Naive thymus-derived CD4-positive, alpha-beta T cell (primary cell): ENCODE measurements at regions of chr1 and their contacts with region 1.

Region 1: DNA sequence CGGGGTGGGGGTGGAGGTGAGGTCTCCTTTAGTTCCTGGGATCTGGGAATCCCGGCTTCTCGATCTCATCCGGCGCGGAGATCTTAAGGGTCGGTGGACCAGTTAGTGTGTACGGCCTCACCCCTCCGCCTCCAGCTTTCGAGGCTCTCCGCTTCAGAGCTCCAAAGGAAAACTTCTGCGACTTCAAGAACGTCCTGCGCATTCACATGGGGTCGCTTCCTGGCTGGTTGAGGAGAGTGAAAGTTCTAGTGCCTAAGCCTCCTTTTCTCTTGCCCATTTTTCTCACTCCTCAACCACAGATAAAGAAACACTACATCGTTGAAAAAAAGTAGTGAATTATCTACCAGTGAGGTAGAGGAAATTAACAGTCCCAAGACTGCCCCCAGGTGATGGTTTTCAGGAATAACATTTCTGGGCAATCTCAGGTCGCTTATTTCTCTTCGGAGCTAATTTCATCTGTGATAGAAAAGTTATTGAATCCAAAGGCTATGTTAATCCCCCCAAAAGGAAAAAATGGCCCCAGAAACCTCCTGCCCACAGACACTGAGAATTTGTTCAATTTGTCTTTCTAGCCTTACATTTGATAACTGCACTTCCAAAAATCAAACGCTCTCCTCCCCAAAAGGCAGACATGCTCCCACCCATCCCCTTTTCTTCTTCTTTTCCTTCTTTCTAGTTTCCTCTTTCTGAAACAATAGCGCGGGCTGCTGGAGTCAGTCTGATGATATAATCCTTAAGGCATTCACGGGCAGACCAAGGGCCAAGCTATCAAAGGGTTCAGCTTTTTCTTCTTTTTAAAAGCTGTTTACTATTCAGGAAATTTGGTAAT is 20.6 kb upstream of the TBX15 start:
- DNase-seq: no peak
- ATAC-seq: peak; percentile 46
- H3K4me3 ChIP-seq: no peak overlapping the region
- H3K4me3 Mint-ChIP-seq: peak overlapping the region; percentile 40 to 78 (median 67)
- H3K27ac ChIP-seq: no peak overlapping the region
- H3K27ac Mint-ChIP-seq: peak overlapping the region in 1 of 9 donors; percentile 60
- H3K4me1 ChIP-seq: no peaks in the 10 kb centered on the region
- H3K4me1 Mint-ChIP-seq: peaks cover 5 to 18% (median 14%) of the 10 kb centered on the region in 7 donors
- H3K27me3 ChIP-seq: peaks cover 2 to 19% of the 10 kb centered on the region in 2 donors
- H3K27me3 Mint-ChIP-seq: peaks cover 72 to 87% (median 77%) of the 10 kb centered on the region in 5 donors

Region 2: GRCh38 chr1:118151312-118151937 is 857.3 kb before region 1 on chr1:
- CTCF ChIA-PET with region 1: no interaction called
- POLR2A ChIA-PET with region 1: no interaction called
- intact Hi-C with region 1: loop called in 1 of 2 experiments (anchors 5 kb)
- DNase-seq: peak in 1 of 9 donors; percentile 4
- ATAC-seq: no peak
- H3K4me3 ChIP-seq: no peak overlapping the region
- H3K4me3 Mint-ChIP-seq: no peak overlapping the region
- H3K27ac ChIP-seq: no peak overlapping the region
- H3K27ac Mint-ChIP-seq: no peak overlapping the region
- H3K4me1 ChIP-seq: no peaks in the 10 kb centered on the region
- H3K4me1 Mint-ChIP-seq: no peaks in the 10 kb centered on the region
- H3K27me3 ChIP-seq: no peaks in the 10 kb centered on the region
- H3K27me3 Mint-ChIP-seq: peaks cover 0 to 4% (median 0%) of the 10 kb centered on the region in 5 donors

Region 3: GRCh38 chr1:118949315-118949714 is 59.4 kb before region 1 on chr1:
- CTCF ChIA-PET with region 1: no interaction called
- POLR2A ChIA-PET with region 1: no interaction called
- intact Hi-C with region 1: no loop called
- DNase-seq: no peak
- ATAC-seq: no peak
- H3K4me3 ChIP-seq: no peak overlapping the region
- H3K4me3 Mint-ChIP-seq: no peak overlapping the region
- H3K27ac ChIP-seq: no peak overlapping the region
- H3K27ac Mint-ChIP-seq: no peak overlapping the region
- H3K4me1 ChIP-seq: no peaks in the 10 kb centered on the region
- H3K4me1 Mint-ChIP-seq: no peaks in the 10 kb centered on the region
- H3K27me3 ChIP-seq: no peaks in the 10 kb centered on the region
- H3K27me3 Mint-ChIP-seq: peaks cover 0 to 27% (median 7%) of the 10 kb centered on the region in 5 donors

Region 4: GRCh38 chr1:118983558-118984041 is 25.1 kb before region 1 on chr1:
- CTCF ChIA-PET with region 1: no interaction called
- POLR2A ChIA-PET with region 1: no interaction called
- intact Hi-C with region 1: loop called in 1 of 2 experiments (anchors 2 kb)
- DNase-seq: no peak
- ATAC-seq: no peak
- H3K4me3 ChIP-seq: no peak overlapping the region
- H3K4me3 Mint-ChIP-seq: peak overlapping the region in 5 of 10 donors; percentile 21 to 82 (median 58)
- H3K27ac ChIP-seq: no peak overlapping the region
- H3K27ac Mint-ChIP-seq: peak overlapping the region in 1 of 9 donors; percentile 69
- H3K4me1 ChIP-seq: no peaks in the 10 kb centered on the region
- H3K4me1 Mint-ChIP-seq: peaks cover 11 to 57% (median 39%) of the 10 kb centered on the region in 7 donors
- H3K27me3 ChIP-seq: peaks cover 4 to 29% of the 10 kb centered on the region in 2 donors
- H3K27me3 Mint-ChIP-seq: peaks cover 82 to 96% (median 88%) of the 10 kb centered on the region in 5 donors

Region 5: DNA sequence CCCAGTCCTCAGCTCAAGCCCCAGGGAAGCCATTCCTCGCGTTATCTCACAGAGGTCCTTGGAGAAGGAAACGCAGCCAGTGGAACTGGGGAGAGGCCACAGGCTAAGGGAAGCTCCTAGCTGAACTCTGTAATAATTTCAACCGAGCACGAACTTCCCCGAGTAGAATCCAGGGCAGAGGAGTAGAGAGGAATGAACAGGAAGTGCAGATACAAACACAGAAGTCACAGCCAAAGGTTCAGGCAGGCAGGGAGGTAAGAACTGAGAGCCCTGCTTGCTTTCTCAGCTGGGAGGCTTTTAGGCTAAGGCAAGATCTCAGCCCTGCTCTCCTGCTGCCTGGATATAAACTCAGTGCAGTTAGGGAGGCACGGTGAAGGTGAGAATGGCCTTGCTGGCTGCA is 108.0 kb after region 1 on chr1:
- CTCF ChIA-PET with region 1: no interaction called
- POLR2A ChIA-PET with region 1: no interaction called
- intact Hi-C with region 1: no loop called
- DNase-seq: no peak
- ATAC-seq: no peak
- H3K4me3 ChIP-seq: no peak overlapping the region
- H3K4me3 Mint-ChIP-seq: no peak overlapping the region
- H3K27ac ChIP-seq: no peak overlapping the region
- H3K27ac Mint-ChIP-seq: no peak overlapping the region
- H3K4me1 ChIP-seq: no peaks in the 10 kb centered on the region
- H3K4me1 Mint-ChIP-seq: peaks cover 0 to 12% (median 6%) of the 10 kb centered on the region in 7 donors
- H3K27me3 ChIP-seq: no peaks in the 10 kb centered on the region
- H3K27me3 Mint-ChIP-seq: no peaks in the 10 kb centered on the region